AG04450 (cell line): ENCODE measurements at regions of chr3 and their contacts with region 1.

Region 1: DNA sequence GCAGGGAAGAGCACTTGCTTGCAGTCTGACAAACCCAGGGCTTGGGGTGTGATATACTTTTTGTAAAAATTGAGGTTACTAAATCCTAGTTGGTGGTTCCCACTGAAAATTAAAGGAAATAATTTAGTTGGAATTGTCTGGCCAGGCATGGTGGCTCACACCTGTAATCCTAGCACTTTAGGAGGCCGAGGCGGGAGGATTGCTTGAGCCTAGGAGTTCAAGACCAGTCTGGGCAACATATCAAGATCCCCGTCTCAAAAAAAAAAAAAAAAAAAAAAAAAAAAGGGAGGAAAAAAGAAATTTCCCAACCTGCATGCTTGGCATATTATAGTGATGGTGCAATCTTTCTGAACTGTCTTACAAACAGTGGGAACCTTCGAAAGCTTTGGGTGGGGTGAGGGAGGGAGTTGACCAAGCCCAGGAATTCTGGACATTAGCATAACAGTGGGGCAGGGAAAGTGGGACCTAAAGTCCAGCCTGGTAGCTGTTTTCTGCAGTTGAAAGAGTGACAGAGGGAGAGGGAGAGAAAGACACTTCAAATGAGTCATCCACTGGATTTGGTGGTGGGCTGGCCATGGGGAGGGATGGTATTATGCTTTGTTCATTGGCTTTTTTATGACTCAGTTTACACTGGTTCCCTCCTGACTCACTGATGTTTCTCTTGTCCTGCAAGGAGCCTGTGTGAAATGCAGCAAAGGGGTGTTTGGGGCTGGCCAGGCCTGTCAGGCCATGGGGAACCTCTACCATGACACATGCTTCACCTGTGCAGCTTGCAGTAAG is 41.1 kb downstream of the LIMD1 start:
- DNase-seq: peak; percentile 52
- H3K4me3 ChIP-seq: no peak overlapping the region
- H3K27ac ChIP-seq: peak overlapping the region; percentile 66
- H3K27me3 ChIP-seq: no peaks in the 10 kb centered on the region
- CTCF ChIP-seq: no peak

Region 2: GRCh38 chr3:45647148-45647619 is 11.5 kb after region 1 on chr3:
- CTCF ChIA-PET with region 1: interaction called, 5 read pairs
- POLR2A ChIA-PET with region 1: interaction called, 19 read pairs
- DNase-seq: peak; percentile 65
- H3K4me3 ChIP-seq: no peak overlapping the region
- H3K27ac ChIP-seq: peak overlapping the region; percentile 86
- H3K27me3 ChIP-seq: no peaks in the 10 kb centered on the region
- CTCF ChIP-seq: no peak